CD4-positive, alpha-beta memory T cell (primary cell): ENCODE measurements at regions of chr21 and their contacts with region 1.

Region 1: GRCh38 chr21:42381334-42381984 is 14.4 kb downstream of the TMPRSS3 start:
- DNase-seq: peak in 3 of 5 donors; percentile 15 to 50 (median 24)
- H3K4me3 ChIP-seq: no peak overlapping the region
- H3K4me3 Mint-ChIP-seq: peak overlapping the region in 1 of 8 donors; percentile 10
- H3K27ac ChIP-seq: no peak overlapping the region
- H3K27ac Mint-ChIP-seq: peak overlapping the region in 2 of 7 donors; percentile 3 to 70
- H3K4me1 ChIP-seq: peaks cover 16% of the 10 kb centered on the region
- H3K4me1 Mint-ChIP-seq: peaks cover 9 to 18% (median 10%) of the 10 kb centered on the region in 4 donors
- H3K27me3 ChIP-seq: no peaks in the 10 kb centered on the region
- H3K27me3 Mint-ChIP-seq: no peaks in the 10 kb centered on the region

Region 2: DNA sequence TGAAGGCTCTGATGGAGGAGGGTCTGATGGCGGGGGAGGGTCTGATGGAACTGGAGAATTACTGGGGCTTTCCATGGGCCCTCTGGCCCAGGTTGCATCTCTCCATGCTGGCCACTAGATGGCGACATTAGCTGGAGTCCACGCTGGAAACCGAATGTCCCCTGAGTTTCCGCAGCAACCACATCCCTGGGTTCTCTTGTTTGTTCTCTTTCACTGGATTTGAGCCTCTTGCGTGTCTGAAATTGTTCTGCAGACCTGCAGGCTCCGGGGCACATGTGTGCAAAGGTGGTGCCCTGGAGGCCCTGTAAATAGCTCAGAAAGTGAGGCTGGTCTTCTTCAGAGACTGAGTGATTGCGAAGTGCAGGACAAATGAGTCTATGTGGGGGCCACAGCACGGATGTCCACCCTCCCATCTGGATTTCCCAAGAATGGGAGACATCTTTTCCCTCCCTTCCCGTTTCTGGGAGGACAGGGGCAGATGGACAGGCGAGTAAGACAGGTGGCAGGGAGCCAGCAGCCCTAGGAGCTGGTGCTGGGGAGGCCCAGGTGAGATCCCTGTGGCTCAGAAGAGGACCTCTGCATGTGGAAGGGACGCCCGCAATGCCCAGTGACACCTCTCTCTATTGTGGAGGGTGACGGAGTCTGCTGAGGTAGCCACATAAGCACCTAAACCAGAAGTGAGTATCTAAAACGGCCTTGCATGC is 235.7 kb before region 1 on chr21:
- CTCF ChIA-PET with region 1: interaction called, 3 read pairs
- POLR2A ChIA-PET with region 1: no interaction called
- intact Hi-C with region 1: loop called (anchors 1 kb)
- DNase-seq: peak; percentile 67 to 72 (median 70)
- H3K4me3 ChIP-seq: no peak overlapping the region
- H3K4me3 Mint-ChIP-seq: peak overlapping the region in 1 of 8 donors; percentile 13
- H3K27ac ChIP-seq: no peak overlapping the region
- H3K27ac Mint-ChIP-seq: peak overlapping the region; percentile 28 to 89 (median 51)
- H3K4me1 ChIP-seq: peaks cover 4% of the 10 kb centered on the region
- H3K4me1 Mint-ChIP-seq: peaks cover 4 to 7% (median 5%) of the 10 kb centered on the region in 4 donors
- H3K27me3 ChIP-seq: no peaks in the 10 kb centered on the region
- H3K27me3 Mint-ChIP-seq: peaks cover 5 to 7% of the 10 kb centered on the region in 2 donors

Region 3: DNA sequence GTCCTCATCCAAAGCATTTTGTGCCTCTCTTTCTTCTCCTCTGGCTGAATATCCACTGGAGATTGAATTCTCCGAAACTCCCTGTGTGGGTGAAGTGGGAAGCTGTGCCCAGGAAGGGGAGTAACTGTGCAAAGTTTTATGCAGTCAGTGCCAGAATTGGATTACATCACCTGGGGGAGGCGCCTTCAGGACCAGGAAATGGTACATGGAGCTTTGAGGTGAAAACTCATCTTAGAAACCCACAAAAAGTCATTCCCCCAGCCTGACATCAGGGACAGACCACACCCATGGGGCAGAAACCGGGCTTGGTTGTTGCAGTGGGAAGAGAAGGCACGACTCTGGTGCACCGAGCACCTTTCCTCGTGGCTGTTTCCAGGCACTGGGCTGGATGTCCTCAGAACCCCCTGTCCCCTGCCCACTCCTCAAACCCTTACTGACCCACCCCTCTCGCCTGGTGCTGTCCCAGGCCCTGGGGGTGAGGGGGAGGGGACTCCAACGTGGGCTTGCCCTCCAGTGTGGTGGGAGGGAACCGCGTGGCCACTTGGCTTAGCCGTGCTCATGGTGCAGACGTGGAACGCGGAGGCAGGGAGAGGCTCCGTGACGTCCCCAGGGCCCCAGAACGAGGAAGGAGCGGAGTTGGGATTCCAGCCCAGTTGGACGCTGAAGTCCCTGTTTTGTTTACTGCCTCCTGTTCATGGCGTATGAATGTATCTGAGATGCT is 82.0 kb before region 1 on chr21:
- CTCF ChIA-PET with region 1: no interaction called
- POLR2A ChIA-PET with region 1: no interaction called
- intact Hi-C with region 1: no loop called
- DNase-seq: peak in 1 of 5 donors; percentile 40
- H3K4me3 ChIP-seq: no peak overlapping the region
- H3K4me3 Mint-ChIP-seq: no peak overlapping the region
- H3K27ac ChIP-seq: no peak overlapping the region
- H3K27ac Mint-ChIP-seq: peak overlapping the region in 4 of 7 donors; percentile 17 to 42 (median 30)
- H3K4me1 ChIP-seq: no peaks in the 10 kb centered on the region
- H3K4me1 Mint-ChIP-seq: peaks cover 0 to 16% (median 4%) of the 10 kb centered on the region in 4 donors
- H3K27me3 ChIP-seq: no peaks in the 10 kb centered on the region
- H3K27me3 Mint-ChIP-seq: peaks cover 0 to 2% of the 10 kb centered on the region in 2 donors

Region 4: GRCh38 chr21:42424914-42425541 is 43.6 kb after region 1 on chr21:
- CTCF ChIA-PET with region 1: interaction called, 19 read pairs
- POLR2A ChIA-PET with region 1: interaction called, 4 read pairs
- intact Hi-C with region 1: loop called (anchors 2 kb)
- DNase-seq: peak; percentile 87 to 92 (median 89)
- H3K4me3 ChIP-seq: peak overlapping the region; percentile 5 to 39
- H3K4me3 Mint-ChIP-seq: peak overlapping the region; percentile 57 to 91 (median 78)
- H3K27ac ChIP-seq: peak overlapping the region; percentile 71
- H3K27ac Mint-ChIP-seq: peak overlapping the region; percentile 67 to 96 (median 93)
- H3K4me1 ChIP-seq: peaks cover 84% of the 10 kb centered on the region
- H3K4me1 Mint-ChIP-seq: peaks cover 64 to 81% (median 74%) of the 10 kb centered on the region in 4 donors
- H3K27me3 ChIP-seq: no peaks in the 10 kb centered on the region
- H3K27me3 Mint-ChIP-seq: no peaks in the 10 kb centered on the region

Region 5: DNA sequence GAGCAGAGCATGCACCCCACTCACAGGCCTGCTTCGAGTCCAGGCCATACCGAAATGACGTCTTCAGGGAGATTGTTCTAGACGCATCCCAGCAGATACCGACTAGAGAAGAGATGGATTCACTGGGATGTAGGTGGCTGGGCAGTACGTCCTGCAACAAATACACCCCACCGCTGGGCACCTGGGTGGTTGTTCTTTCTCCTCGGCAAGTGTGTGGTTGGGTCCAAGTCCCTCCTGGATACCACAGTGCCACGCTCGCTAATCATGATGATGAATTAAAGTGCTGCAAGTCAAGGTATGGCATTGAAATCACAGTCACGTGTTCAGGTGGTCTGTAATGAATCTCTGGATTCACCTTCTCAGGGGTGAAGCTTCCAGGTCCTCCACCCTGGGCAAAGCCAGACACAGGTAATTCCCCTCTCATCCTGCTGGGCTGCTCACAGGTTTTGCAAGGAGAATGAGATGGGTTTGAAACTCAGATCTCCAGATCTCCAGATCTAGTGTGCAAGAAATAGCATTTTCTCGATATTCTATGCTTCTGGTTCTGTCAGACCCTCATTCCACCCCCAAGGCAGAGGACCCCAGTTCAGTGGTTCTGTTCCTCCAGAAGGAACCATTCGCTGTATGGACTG is 68.0 kb after region 1 on chr21:
- CTCF ChIA-PET with region 1: interaction called, 21 read pairs
- POLR2A ChIA-PET with region 1: interaction called, 11 read pairs
- intact Hi-C with region 1: loop called (anchors 1 kb)
- DNase-seq: no peak
- H3K4me3 ChIP-seq: no peak overlapping the region
- H3K4me3 Mint-ChIP-seq: no peak overlapping the region
- H3K27ac ChIP-seq: peak overlapping the region; percentile 3
- H3K27ac Mint-ChIP-seq: peak overlapping the region; percentile 88 to 97 (median 93)
- H3K4me1 ChIP-seq: peaks cover 17% of the 10 kb centered on the region
- H3K4me1 Mint-ChIP-seq: peaks cover 12 to 40% (median 25%) of the 10 kb centered on the region in 4 donors
- H3K27me3 ChIP-seq: no peaks in the 10 kb centered on the region
- H3K27me3 Mint-ChIP-seq: no peaks in the 10 kb centered on the region

Region 6: DNA sequence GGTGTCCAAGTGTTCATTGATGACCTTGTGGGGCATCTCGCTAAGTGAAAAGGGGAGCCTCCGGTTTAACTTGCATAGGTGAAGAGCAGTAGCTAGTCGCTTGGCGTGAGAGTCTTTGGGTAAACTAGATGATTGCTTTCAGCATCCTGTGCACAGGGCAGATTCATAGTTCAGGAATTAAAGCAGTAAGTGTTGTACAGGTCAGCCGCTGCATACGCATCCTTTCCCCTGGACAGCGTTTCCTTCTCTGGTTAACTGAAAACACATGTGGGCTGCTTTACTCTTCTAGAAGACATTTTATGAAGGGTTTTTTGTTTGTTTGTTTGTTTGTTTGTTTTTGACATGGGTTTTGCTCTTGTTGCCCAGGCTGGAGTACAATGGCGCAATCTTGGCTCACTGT is 523.7 kb after region 1 on chr21:
- CTCF ChIA-PET with region 1: no interaction called
- POLR2A ChIA-PET with region 1: no interaction called
- intact Hi-C with region 1: no loop called
- DNase-seq: no peak
- H3K4me3 ChIP-seq: no peak overlapping the region
- H3K4me3 Mint-ChIP-seq: no peak overlapping the region
- H3K27ac ChIP-seq: no peak overlapping the region
- H3K27ac Mint-ChIP-seq: no peak overlapping the region
- H3K4me1 ChIP-seq: no peaks in the 10 kb centered on the region
- H3K4me1 Mint-ChIP-seq: peaks cover 0 to 5% (median under 1%) of the 10 kb centered on the region in 4 donors
- H3K27me3 ChIP-seq: no peaks in the 10 kb centered on the region
- H3K27me3 Mint-ChIP-seq: no peaks in the 10 kb centered on the region